ENCODE measurements at regions of chr14 and their contacts with region 1.

Region 1: DNA sequence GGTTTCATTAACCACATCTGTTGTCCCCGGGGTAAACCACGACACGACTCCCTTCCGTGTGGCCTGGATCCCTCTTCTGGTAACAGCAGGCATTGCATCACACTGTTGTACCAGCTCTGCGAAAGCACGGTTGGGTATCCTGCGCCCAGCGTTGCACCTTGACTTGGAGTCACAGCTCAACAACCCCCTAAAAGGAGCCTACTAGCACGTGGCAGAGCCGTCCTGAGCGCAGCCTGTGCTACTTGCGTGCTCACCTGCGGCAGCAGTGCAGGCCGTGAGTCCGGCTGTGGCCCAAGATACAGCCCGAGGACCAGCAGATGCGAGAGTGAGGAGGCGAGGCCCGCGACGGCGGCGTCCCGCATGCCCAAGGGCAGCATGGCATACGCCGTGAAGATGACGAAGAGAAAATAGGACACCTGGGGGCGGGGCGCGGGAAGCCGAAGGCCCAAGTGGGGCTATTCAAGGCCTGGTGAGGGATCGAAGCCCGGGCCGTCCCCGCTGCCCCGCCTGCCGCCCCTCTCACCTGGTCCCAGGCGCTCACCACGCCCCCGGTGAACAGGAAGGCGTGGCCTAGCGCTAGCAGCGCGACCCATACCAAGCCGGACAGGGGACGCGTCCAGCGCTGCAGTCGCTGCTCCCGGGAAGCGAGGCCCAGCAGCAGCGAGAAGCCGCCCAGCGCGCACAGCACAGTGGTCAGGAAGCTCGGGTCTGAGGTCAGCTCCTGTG is 2.4 kb downstream of the ADCY4 start:
- DNase-seq: peak; percentile 86
- ATAC-seq: peak; percentile 83
- H3K4me3 ChIP-seq: peak overlapping the region; percentile 30 to 70 (median 42)
- H3K27ac ChIP-seq: no peak overlapping the region
- H3K4me1 ChIP-seq: peaks cover 36% of the 10 kb centered on the region
- H3K27me3 ChIP-seq: peaks cover 29 to 86% of the 10 kb centered on the region in 2 experiments
- CTCF ChIP-seq: peak; percentile 97
- EP300 ChIP-seq: 0 out of 4 replicates have a peak, but pooled peaks of 1 of the 2 experiments have one; percentile 19
- POLR2A ChIP-seq: no peak
- RAD21 ChIP-seq: peak; percentile 72

Region 2: GRCh38 chr14:23929822-23930294 is 402.6 kb before region 1 on chr14:
- CTCF ChIA-PET with region 1: no interaction called
- POLR2A ChIA-PET with region 1: no interaction called
- in situ Hi-C with region 1: no loop called
- intact Hi-C with region 1: no loop called
- DNase-seq: peak; percentile 87
- ATAC-seq: peak; percentile 94
- H3K4me3 ChIP-seq: no peak overlapping the region
- H3K27ac ChIP-seq: no peak overlapping the region
- H3K4me1 ChIP-seq: peaks cover 11% of the 10 kb centered on the region
- H3K27me3 ChIP-seq: no peaks in the 10 kb centered on the region
- CTCF ChIP-seq: peak; percentile 93
- EP300 ChIP-seq: no peak
- POLR2A ChIP-seq: no peak
- RAD21 ChIP-seq: peak; percentile 87

Region 3: GRCh38 chr14:24315807-24316603 is 16.4 kb before region 1 on chr14:
- CTCF ChIA-PET with region 1: interaction called, 3 read pairs
- POLR2A ChIA-PET with region 1: interaction called, 11 read pairs
- in situ Hi-C with region 1: no loop called
- intact Hi-C with region 1: no loop called
- DNase-seq: peak; percentile 65
- ATAC-seq: peak; percentile 81
- H3K4me3 ChIP-seq: peak overlapping the region; percentile 29 to 73 (median 40)
- H3K27ac ChIP-seq: peak overlapping the region; percentile 18
- H3K4me1 ChIP-seq: peaks cover 37% of the 10 kb centered on the region
- H3K27me3 ChIP-seq: peaks cover 6 to 39% of the 10 kb centered on the region in 2 experiments; a peak in 4 of 5 replicates
- CTCF ChIP-seq: peak; percentile 88
- EP300 ChIP-seq: 0 out of 4 replicates have a peak, but pooled peaks of 1 of the 2 experiments have one; percentile 9
- POLR2A ChIP-seq: no peak; a peak in 2 of 4 replicates
- RAD21 ChIP-seq: peak; percentile 72

Region 4: DNA sequence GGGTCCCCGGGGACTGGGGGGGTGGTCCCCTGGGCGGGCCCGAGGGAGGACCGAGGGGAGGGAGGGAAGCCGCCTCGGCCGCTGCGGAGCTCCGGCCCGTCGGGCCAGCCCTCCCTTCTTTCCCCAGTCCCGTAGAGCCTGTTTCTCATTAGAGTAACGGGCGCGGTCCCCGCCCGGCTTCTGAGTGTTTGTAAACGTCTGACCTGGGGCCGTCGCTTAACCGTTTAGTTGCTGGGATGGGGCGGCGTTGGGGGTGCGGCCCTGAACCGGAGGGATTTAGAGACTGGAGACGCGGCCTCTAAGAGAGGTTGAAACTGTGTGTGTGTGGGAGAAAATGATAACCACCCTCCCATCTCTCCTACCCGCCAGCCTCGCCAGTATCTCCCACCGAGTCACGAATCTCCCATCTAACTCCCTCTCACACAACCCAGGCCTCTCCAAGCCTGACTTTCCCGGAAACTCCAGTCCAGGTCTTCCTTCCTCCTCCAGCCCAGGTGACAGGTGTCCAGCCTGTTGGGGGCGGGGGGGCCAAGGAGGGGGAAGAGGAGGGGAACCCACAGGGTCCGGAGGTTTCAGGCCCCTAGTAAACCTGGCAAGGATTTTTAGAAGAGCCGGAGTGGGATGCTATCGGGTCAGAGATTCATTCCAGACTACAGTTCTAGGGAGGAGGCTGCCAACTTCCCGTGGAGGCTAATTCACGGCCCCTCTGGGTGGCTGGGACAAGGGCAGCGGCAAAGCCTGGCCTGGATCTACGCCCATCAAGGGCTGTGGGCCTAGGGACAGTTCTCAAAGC is 34.5 kb after region 1 on chr14:
- CTCF ChIA-PET with region 1: interaction called, 30 read pairs
- POLR2A ChIA-PET with region 1: interaction called, 3 read pairs
- in situ Hi-C with region 1: no loop called
- intact Hi-C with region 1: loop called (anchors 1 kb)
- DNase-seq: peak; percentile 92
- ATAC-seq: peak; percentile 83
- H3K4me3 ChIP-seq: peak overlapping the region; percentile 71 to 80 (median 74)
- H3K27ac ChIP-seq: no peak overlapping the region
- H3K4me1 ChIP-seq: peaks cover 26% of the 10 kb centered on the region
- H3K27me3 ChIP-seq: peaks cover 20 to 54% of the 10 kb centered on the region in 2 experiments
- CTCF ChIP-seq: no peak; the same call in 1 of the 2 replicates
- EP300 ChIP-seq: peak in 1 of 2 experiments; percentile 29; a peak in 1 of 4 replicates
- POLR2A ChIP-seq: no peak
- RAD21 ChIP-seq: no peak

Region 5: GRCh38 chr14:24398653-24399446 is 66.4 kb after region 1 on chr14 and contains the start of gene NYNRIN:
- CTCF ChIA-PET with region 1: no interaction called
- POLR2A ChIA-PET with region 1: no interaction called
- in situ Hi-C with region 1: no loop called
- intact Hi-C with region 1: loop called (anchors 1 kb)
- DNase-seq: no peak
- ATAC-seq: peak; percentile 78
- H3K4me3 ChIP-seq: peak within 1 kb of the TSS; percentile 54 to 74 (median 62)
- H3K27ac ChIP-seq: no peak within 1 kb of the TSS
- H3K4me1 ChIP-seq: peaks cover 43% of the 10 kb centered on the region
- H3K27me3 ChIP-seq: peaks cover 15 to 58% of the 10 kb centered on the region in 2 experiments
- CTCF ChIP-seq: 0 out of 2 replicates have a peak, but pooled peaks have one; percentile 5
- EP300 ChIP-seq: no peak
- POLR2A ChIP-seq: no peak
- RAD21 ChIP-seq: no peak
- total RNA-seq, gene NYNRIN: 1.1 and 1.3 TPM in 2 replicates

Region 6: GRCh38 chr14:24411443-24412389 is 79.3 kb after region 1 on chr14:
- CTCF ChIA-PET with region 1: interaction called, 26 read pairs
- POLR2A ChIA-PET with region 1: no interaction called
- in situ Hi-C with region 1: no loop called
- intact Hi-C with region 1: loop called (anchors 1 kb)
- DNase-seq: peak; percentile 69
- ATAC-seq: peak; percentile 69
- H3K4me3 ChIP-seq: no peak overlapping the region
- H3K27ac ChIP-seq: no peak overlapping the region
- H3K4me1 ChIP-seq: no peaks in the 10 kb centered on the region
- H3K27me3 ChIP-seq: peaks cover 0 to 2% of the 10 kb centered on the region in 2 experiments; a peak in 1 of 5 replicates
- CTCF ChIP-seq: peak; percentile 88
- EP300 ChIP-seq: peak in 1 of 2 experiments; percentile 37; a peak in 1 of 4 replicates
- POLR2A ChIP-seq: no peak
- RAD21 ChIP-seq: peak; percentile 83

Region 7: DNA sequence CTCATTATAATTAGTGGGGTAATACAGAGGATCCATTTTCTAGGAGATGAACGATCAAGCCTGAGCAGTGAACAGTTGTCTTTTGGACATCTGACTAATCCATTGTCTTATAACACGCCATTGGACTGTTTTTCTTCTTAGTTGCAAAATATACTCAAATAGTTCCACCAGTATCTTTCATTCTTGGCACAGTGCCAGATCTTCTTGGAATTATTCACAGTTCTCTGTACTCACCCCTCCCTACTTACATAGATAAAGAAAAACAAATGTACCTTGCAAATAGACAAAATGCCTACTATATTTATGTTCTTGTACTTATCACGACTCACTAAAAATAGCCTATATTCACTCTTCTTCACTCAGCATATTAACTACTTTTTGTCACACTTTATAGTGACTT is 93.3 kb after region 1 on chr14:
- CTCF ChIA-PET with region 1: interaction called, 235 read pairs
- POLR2A ChIA-PET with region 1: interaction called, 98 read pairs
- in situ Hi-C with region 1: loop called (anchors 5 kb)
- intact Hi-C with region 1: no loop called
- DNase-seq: peak; percentile 63
- ATAC-seq: no peak
- H3K4me3 ChIP-seq: no peak overlapping the region
- H3K27ac ChIP-seq: no peak overlapping the region
- H3K4me1 ChIP-seq: peaks cover 74% of the 10 kb centered on the region
- H3K27me3 ChIP-seq: no peaks in the 10 kb centered on the region; a peak in 2 of 5 replicates
- CTCF ChIP-seq: no peak
- EP300 ChIP-seq: no peak
- POLR2A ChIP-seq: no peak
- RAD21 ChIP-seq: no peak

Region 8: DNA sequence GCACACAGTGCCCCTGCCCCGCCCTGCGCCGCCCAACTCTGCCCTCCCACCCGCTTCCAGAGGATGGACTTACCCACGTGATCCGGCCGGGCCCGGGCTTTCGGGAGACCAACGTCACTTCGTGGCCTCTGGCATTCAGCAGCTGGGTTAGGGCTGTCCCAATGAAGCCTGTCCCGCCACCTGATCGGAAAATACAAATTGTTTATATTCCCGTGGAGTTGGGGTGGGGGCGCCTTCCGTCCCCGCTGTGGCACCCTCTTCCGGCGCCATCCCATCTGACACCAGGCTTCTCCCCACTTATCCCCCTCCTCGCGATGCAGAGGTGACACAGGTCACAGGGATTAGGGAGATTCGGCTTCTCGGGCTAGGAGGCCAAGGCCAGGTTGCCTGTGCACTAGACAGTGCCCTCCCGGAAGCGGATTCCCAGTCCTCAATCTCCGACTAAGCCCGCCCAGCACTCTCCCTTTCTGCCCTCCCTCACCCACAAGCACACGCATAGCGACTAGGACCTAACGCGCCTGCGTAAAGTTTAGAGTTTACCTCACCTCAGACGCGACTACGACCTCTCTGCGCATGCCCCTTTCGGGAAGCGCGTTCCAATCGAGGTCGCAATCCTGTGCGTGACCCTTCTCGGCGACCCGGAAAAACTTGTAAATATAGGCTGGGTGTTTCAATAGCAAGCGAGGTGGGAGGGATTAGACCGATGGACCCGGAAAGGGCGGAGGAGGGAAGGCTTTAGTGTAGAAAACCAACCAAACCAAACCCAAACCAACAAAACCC is 110.0 kb after region 1 on chr14 and contains the start of gene SDR39U1:
- CTCF ChIA-PET with region 1: interaction called, 235 read pairs
- POLR2A ChIA-PET with region 1: interaction called, 39 read pairs
- in situ Hi-C with region 1: no loop called
- intact Hi-C with region 1: no loop called
- DNase-seq: peak; percentile 100
- ATAC-seq: peak; percentile 91
- H3K4me3 ChIP-seq: peak within 1 kb of the TSS; percentile 74 to 98 (median 84)
- H3K27ac ChIP-seq: peak within 1 kb of the TSS; percentile 93
- H3K4me1 ChIP-seq: peaks cover 18% of the 10 kb centered on the region
- H3K27me3 ChIP-seq: peaks cover 0 to 5% of the 10 kb centered on the region in 2 experiments; a peak in 1 of 5 replicates
- CTCF ChIP-seq: peak; percentile 50
- EP300 ChIP-seq: 0 out of 4 replicates have a peak, but pooled peaks have one; percentile 44 to 47
- POLR2A ChIP-seq: peak in 1 of 2 experiments; percentile 98; a peak in 2 of 4 replicates
- RAD21 ChIP-seq: no peak; the same call in 1 of the 2 replicates
- total RNA-seq, gene SDR39U1: 25.0 and 34.4 TPM in 2 replicates